Activated T-helper 2 cell treated with anti-CD3 and anti-CD28 coated beads, Interferon-gamma antibody, Interleukin-2, Interleukin-4, amounts not matched to agents 10 μg/mL and 5 μg/mL and 100 μg/mL, durations not matched to agents 14 hours and 24 hours and 36 hours (primary cell): ENCODE measurements at regions of chr6 and their contacts with region 1.

Region 1: GRCh38 chr6:26478985-26479278 is 21.2 kb upstream of the BTN1A1 start:
- DNase-seq: no peak
- H3K4me3 Mint-ChIP-seq: no peak overlapping the region
- H3K27ac Mint-ChIP-seq: no peak overlapping the region
- H3K4me1 Mint-ChIP-seq: peaks cover 20% of the 10 kb centered on the region
- H3K27me3 Mint-ChIP-seq: no peaks in the 10 kb centered on the region

Region 2: GRCh38 chr6:26411751-26412150 is 67.2 kb before region 1 on chr6:
- intact Hi-C with region 1: no loop called
- DNase-seq: no peak
- H3K4me3 Mint-ChIP-seq: no peak overlapping the region
- H3K27ac Mint-ChIP-seq: no peak overlapping the region
- H3K4me1 Mint-ChIP-seq: peaks cover 13% of the 10 kb centered on the region
- H3K27me3 Mint-ChIP-seq: no peaks in the 10 kb centered on the region

Region 3: GRCh38 chr6:26494117-26494516 is 15.2 kb after region 1 on chr6:
- intact Hi-C with region 1: loop called (anchors 2 kb)
- DNase-seq: no peak
- H3K4me3 Mint-ChIP-seq: no peak overlapping the region
- H3K27ac Mint-ChIP-seq: no peak overlapping the region
- H3K4me1 Mint-ChIP-seq: peaks cover 23% of the 10 kb centered on the region
- H3K27me3 Mint-ChIP-seq: peaks cover 3% of the 10 kb centered on the region